ENCODE measurements at regions of chr12 and their contacts with region 1.

Region 1: GRCh38 chr12:100554608-100555077 is 18.8 kb upstream of the GAS2L3 start:
- DNase-seq: peak; percentile 59
- H3K4me3 ChIP-seq: no peak overlapping the region
- H3K27ac ChIP-seq: no peak overlapping the region
- H3K4me1 ChIP-seq: no peaks in the 10 kb centered on the region
- CTCF ChIP-seq: peak; percentile 81

Region 2: GRCh38 chr12:100348657-100349454 is 205.8 kb before region 1 on chr12:
- CTCF ChIA-PET with region 1: no interaction called
- POLR2A ChIA-PET with region 1: no interaction called
- intact Hi-C with region 1: loop called (anchors 5 kb)
- DNase-seq: peak; percentile 33
- H3K4me3 ChIP-seq: no peak overlapping the region
- H3K27ac ChIP-seq: no peak overlapping the region
- H3K4me1 ChIP-seq: no peaks in the 10 kb centered on the region
- CTCF ChIP-seq: peak; percentile 70